ENCODE measurements at regions of chr3 and their contacts with region 1.

Region 1: GRCh38 chr3:128879125-128879969 is at the start of gene ACAD9:
- DNase-seq: peak; percentile 98
- ATAC-seq: peak; percentile 92
- H3K4me3 Mint-ChIP-seq: peak within 1 kb of the TSS; percentile 97
- H3K27ac Mint-ChIP-seq: peak within 1 kb of the TSS; percentile 99
- H3K4me1 Mint-ChIP-seq: peaks cover 66% of the 10 kb centered on the region
- H3K27me3 Mint-ChIP-seq: no peaks in the 10 kb centered on the region
- total RNA-seq, gene ACAD9: 60.0 to 70.7 TPM

Region 2: DNA sequence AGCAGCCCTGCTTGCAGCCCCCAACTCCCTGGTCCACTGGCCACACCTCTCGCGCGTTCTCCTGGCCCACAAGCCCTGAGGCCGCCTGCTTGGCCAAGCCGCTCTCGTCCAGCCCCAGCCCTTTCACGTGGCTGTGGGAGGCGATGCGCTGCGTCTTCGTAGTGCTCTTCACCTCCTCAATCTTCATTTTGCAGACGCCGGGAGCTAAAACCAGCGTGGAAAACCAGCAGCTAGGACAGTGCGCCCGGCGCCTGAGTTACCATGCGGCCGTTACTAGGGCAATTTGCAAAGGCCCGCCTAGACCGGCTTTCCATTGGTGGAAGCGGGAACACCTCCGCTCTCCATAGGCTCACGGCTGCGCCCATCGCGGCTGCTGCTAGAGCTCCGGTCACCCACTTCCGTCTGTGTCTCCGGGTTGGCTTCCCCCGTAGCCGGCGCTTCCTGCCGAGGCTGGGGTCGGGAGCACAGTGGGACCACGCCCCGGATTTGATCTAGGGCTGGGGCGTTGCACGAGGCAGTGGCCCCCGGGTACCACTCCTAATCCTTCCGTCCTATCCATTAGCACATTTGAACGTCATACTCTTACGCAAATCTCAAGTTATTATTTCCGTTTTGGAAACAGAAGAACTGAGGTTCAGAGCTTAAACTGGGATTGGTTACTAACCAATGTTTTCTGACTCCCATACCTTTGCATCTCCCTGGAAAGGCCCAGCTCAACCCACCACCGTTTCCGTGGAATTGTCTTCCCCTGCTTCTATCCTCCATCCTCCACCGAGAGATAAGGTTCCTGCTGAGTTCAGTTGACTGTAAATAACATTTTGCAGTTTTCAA is 755.6 kb before region 1 on chr3 and contains the start of gene RUVBL1:
- CTCF ChIA-PET with region 1: no interaction called
- POLR2A ChIA-PET with region 1: no interaction called
- intact Hi-C with region 1: loop called in 1 of 2 experiments (anchors 5 kb)
- DNase-seq: peak; percentile 99
- ATAC-seq: peak; percentile 99
- H3K4me3 Mint-ChIP-seq: peak within 1 kb of the TSS; percentile 99
- H3K27ac Mint-ChIP-seq: peak within 1 kb of the TSS; percentile 96
- H3K4me1 Mint-ChIP-seq: peaks cover 30% of the 10 kb centered on the region
- H3K27me3 Mint-ChIP-seq: no peaks in the 10 kb centered on the region
- total RNA-seq, gene RUVBL1: 97.0 to 99.9 TPM

Region 3: DNA sequence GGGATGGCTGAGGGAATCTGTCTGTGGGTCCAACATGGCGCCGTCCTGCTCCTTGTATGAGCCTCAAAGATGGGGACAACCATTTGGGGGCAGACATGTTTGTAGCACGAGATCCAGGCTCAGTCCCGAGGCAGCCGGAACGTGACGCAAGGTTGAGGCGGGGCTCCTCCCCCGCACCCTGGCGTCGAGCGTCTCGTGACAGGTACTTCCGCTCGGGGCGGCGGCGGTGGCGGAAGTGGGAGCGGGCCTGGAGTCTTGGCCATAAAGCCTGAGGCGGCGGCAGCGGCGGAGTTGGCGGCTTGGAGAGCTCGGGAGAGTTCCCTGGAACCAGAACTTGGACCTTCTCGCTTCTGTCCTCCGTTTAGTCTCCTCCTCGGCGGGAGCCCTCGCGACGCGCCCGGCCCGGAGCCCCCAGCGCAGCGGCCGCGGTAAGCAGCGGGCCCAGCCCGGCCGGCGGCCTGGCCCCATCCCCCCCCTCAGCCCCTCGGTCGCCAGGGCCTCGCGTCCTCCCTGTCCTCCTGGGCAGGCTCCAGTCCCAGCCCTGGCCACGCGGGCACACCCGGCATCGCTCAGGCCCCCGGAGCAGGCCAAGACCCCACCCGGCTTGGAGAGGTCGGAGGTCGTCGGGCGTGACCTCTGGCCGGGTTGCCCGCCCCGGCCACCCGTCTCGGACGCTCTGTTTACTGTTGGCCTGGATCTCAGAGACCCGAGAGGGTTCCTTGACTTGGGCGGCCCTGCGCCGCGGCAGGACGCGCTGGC is 153.2 kb before region 1 on chr3 and contains the start of gene RAB7A:
- CTCF ChIA-PET with region 1: no interaction called
- POLR2A ChIA-PET with region 1: no interaction called
- intact Hi-C with region 1: loop called in 1 of 2 experiments (anchors 1 kb)
- DNase-seq: peak; percentile 99
- ATAC-seq: peak; percentile 92
- H3K4me3 Mint-ChIP-seq: peak within 1 kb of the TSS; percentile 89
- H3K27ac Mint-ChIP-seq: peak within 1 kb of the TSS; percentile 92
- H3K4me1 Mint-ChIP-seq: peaks cover 52% of the 10 kb centered on the region
- H3K27me3 Mint-ChIP-seq: no peaks in the 10 kb centered on the region
- total RNA-seq, gene RAB7A: 297 to 534 TPM

Region 4: DNA sequence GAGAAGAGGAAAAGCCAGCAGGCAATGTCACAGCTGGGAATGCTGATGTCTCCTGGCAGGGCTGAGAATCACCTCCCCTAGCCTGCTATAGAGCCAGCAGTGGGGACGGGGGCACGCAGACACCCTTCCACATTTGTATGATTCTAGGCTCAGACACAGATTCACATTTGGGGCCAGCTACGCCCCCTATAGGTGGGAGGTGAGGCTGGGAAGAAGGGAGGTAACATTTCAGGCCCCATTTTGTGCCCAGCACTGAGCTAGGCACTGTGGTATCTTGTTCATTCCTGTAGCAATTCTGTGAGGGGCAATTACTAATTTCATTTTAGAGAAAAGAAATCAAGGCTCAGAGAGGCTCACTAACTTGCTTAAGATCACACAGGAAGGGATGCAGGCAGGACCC is 15.8 kb before region 1 on chr3:
- CTCF ChIA-PET with region 1: interaction called, 14 read pairs
- POLR2A ChIA-PET with region 1: interaction called, 5 read pairs
- intact Hi-C with region 1: no loop called
- DNase-seq: peak; percentile 60
- ATAC-seq: peak; percentile 62
- H3K4me3 Mint-ChIP-seq: no peak overlapping the region
- H3K27ac Mint-ChIP-seq: no peak overlapping the region
- H3K4me1 Mint-ChIP-seq: no peaks in the 10 kb centered on the region
- H3K27me3 Mint-ChIP-seq: no peaks in the 10 kb centered on the region

Region 5: DNA sequence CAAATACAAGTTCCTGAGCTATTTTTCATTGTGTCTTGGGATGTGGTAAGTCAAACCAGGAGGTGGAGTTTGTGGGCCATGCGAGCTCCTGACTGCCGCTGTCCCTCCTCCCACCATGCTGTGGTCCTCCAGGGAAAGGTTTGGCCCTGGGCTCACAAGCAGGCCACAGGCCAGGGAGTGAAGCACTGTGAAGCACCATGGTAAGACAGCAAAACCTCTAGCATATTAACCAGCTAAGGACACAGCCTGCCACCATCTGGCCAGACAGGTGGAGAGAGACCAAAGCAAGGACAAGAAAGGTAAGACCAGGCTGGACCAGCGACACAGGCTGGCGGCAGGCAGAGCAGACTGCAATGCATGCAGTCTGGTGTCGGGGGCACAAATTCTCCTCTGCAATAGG is 227.0 kb after region 1 on chr3:
- CTCF ChIA-PET with region 1: no interaction called
- POLR2A ChIA-PET with region 1: interaction called, 4 read pairs
- intact Hi-C with region 1: loop called in 1 of 2 experiments (anchors 5 kb)
- DNase-seq: no peak
- ATAC-seq: no peak
- H3K4me3 Mint-ChIP-seq: no peak overlapping the region
- H3K27ac Mint-ChIP-seq: peak overlapping the region; percentile 77
- H3K4me1 Mint-ChIP-seq: peaks cover 86% of the 10 kb centered on the region
- H3K27me3 Mint-ChIP-seq: no peaks in the 10 kb centered on the region

Region 6: GRCh38 chr3:129249276-129250065 is 370.1 kb after region 1 on chr3 and contains the start of gene COPG1:
- CTCF ChIA-PET with region 1: interaction called, 5 read pairs
- POLR2A ChIA-PET with region 1: interaction called, 3 read pairs
- intact Hi-C with region 1: loop called (anchors 5 to 10 kb)
- DNase-seq: peak; percentile 91
- ATAC-seq: peak; percentile 92
- H3K4me3 Mint-ChIP-seq: peak within 1 kb of the TSS; percentile 96
- H3K27ac Mint-ChIP-seq: peak within 1 kb of the TSS; percentile 96
- H3K4me1 Mint-ChIP-seq: peaks cover 32% of the 10 kb centered on the region
- H3K27me3 Mint-ChIP-seq: no peaks in the 10 kb centered on the region
- total RNA-seq, gene COPG1: 120 to 142 TPM

Measured in activated CD4-positive, alpha-beta T cell treated with anti-CD3 and anti-CD28 coated beads for 36 hours (primary cell).